MCF 10A (cell line): ENCODE measurements at regions of chr12 and their contacts with region 1.

Region 1: GRCh38 chr12:105107494-105108371 is at the start of gene WASHC4:
- DNase-seq: peak; percentile 93
- H3K4me3 Mint-ChIP-seq: peak within 1 kb of the TSS; percentile 96
- H3K27ac Mint-ChIP-seq: peak within 1 kb of the TSS; percentile 96
- H3K4me1 Mint-ChIP-seq: peaks cover 26% of the 10 kb centered on the region
- H3K27me3 Mint-ChIP-seq: no peaks in the 10 kb centered on the region
- CTCF ChIP-seq: no peak
- total RNA-seq, gene WASHC4: 44.5 and 47.6 TPM in 2 replicates

Region 2: GRCh38 chr12:105076098-105076497 is 31.6 kb before region 1 on chr12:
- CTCF ChIA-PET with region 1: interaction called, 6 read pairs
- POLR2A ChIA-PET with region 1: interaction called, 94 read pairs
- intact Hi-C with region 1: no loop called
- DNase-seq: peak; percentile 63
- H3K4me3 Mint-ChIP-seq: no peak overlapping the region
- H3K27ac Mint-ChIP-seq: peak overlapping the region; percentile 33
- H3K4me1 Mint-ChIP-seq: peaks cover 7% of the 10 kb centered on the region
- H3K27me3 Mint-ChIP-seq: no peaks in the 10 kb centered on the region
- CTCF ChIP-seq: no peak

Region 3: DNA sequence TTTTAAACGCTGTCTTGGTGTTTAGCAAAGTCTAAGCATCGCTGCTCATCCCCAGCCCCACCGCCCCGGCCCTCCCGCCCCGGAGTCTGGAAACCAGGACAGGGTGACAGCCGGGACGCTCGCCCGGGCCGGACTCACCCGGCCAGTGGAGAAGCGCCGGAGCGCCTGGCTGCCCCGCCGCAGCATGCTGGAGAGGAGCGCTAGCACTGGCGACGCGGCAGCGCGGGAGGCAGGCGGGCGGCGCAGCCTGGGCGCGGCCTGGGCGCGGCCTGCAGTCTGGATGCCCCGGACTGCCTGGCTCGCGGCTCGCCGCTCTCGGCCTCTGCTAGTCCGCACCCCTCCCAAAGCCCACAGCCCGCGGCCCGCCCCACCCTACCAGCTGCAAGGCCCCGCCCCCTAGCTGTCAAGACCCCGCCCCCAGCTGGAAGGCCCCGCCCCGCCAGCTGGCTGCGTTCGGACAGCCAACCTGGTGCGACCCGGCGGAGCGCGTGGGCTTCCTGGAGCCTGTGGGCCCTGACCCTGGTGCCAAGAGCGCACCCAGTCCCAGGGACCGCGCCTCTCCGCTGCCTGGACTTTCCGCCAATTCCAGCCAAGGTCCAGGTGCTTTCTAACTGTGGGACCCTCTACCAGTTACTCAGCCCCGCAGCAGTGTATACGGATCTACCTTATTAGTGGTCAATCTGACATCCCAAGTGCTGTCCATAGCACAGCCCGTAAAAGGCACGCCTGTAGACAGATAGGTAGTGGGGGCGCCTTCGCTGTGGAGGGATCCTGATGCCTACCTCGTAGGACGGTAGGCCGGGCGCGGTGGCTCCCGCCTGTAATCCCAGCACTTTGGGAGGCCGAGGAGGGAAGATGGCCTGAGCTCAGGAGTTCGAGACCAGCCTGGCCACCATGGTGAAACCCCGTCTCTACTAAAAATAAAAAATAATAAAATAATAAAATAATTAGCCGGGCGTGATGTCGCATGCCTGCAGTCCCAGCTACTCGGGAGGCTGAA is 23.2 kb before region 1 on chr12 and contains the start of gene ALDH1L2:
- CTCF ChIA-PET with region 1: interaction called, 6 read pairs
- POLR2A ChIA-PET with region 1: interaction called, 94 read pairs
- intact Hi-C with region 1: no loop called
- DNase-seq: peak; percentile 85
- H3K4me3 Mint-ChIP-seq: peak within 1 kb of the TSS; percentile 92
- H3K27ac Mint-ChIP-seq: peak within 1 kb of the TSS; percentile 97
- H3K4me1 Mint-ChIP-seq: peaks cover 23% of the 10 kb centered on the region
- H3K27me3 Mint-ChIP-seq: no peaks in the 10 kb centered on the region
- CTCF ChIP-seq: no peak
- total RNA-seq, gene ALDH1L2: 165 TPM in 2 replicates

Region 4: GRCh38 chr12:105092336-105092735 is 15.4 kb before region 1 on chr12:
- CTCF ChIA-PET with region 1: no interaction called
- POLR2A ChIA-PET with region 1: interaction called, 47 read pairs
- intact Hi-C with region 1: no loop called
- DNase-seq: peak; percentile 84
- H3K4me3 Mint-ChIP-seq: peak overlapping the region; percentile 58
- H3K27ac Mint-ChIP-seq: peak overlapping the region; percentile 6
- H3K4me1 Mint-ChIP-seq: no peaks in the 10 kb centered on the region
- H3K27me3 Mint-ChIP-seq: no peaks in the 10 kb centered on the region
- CTCF ChIP-seq: no peak

Region 5: GRCh38 chr12:105141320-105141918 is 33.7 kb after region 1 on chr12:
- CTCF ChIA-PET with region 1: no interaction called
- POLR2A ChIA-PET with region 1: interaction called, 16 read pairs
- intact Hi-C with region 1: no loop called
- DNase-seq: no peak
- H3K4me3 Mint-ChIP-seq: no peak overlapping the region
- H3K27ac Mint-ChIP-seq: no peak overlapping the region
- H3K4me1 Mint-ChIP-seq: peaks cover 5% of the 10 kb centered on the region
- H3K27me3 Mint-ChIP-seq: no peaks in the 10 kb centered on the region
- CTCF ChIP-seq: no peak

Region 6: GRCh38 chr12:105330283-105330930 is 222.7 kb after region 1 on chr12 and contains the start of gene C12orf75:
- CTCF ChIA-PET with region 1: no interaction called
- POLR2A ChIA-PET with region 1: interaction called, 3 read pairs
- intact Hi-C with region 1: loop called (anchors 5 kb)
- DNase-seq: peak; percentile 59
- H3K4me3 Mint-ChIP-seq: peak within 1 kb of the TSS; percentile 71
- H3K27ac Mint-ChIP-seq: no peak within 1 kb of the TSS
- H3K4me1 Mint-ChIP-seq: peaks cover 28% of the 10 kb centered on the region
- H3K27me3 Mint-ChIP-seq: no peaks in the 10 kb centered on the region
- CTCF ChIP-seq: no peak
- total RNA-seq, gene C12orf75: 53.6 and 67.7 TPM in 2 replicates